Left lung (tissue), 14 donors: ENCODE measurements at regions of chr10 and their contacts with region 1.

Region 1: DNA sequence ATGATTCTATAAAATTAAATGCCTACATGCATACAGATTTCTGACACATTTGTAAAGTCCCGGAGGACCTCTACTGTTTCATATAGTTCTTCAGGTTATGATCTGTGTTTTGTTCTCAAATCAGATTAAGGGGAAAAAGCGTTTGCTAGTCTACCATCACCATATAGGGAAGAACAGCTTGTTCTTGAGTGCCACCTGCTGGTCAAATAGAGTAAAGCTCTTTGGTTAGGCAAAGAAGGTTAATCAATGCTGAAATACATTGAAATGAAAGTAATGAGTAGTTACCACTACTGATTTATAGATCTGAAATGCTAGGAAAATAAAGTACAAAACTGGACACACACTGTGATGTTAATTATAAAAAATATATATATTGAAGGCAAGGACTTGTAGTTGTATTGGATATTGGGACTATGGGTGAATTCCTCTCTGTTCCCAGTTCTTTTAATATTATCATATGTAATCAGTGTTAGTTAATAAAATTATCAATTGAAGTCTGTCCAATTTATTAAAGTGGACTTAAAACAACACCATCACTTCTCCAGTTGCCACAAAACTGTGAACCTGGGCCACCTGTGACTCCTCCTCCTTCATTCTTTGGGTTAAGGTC is 72.6 kb upstream of the PDLIM1 start:
- DNase-seq: peak in 2 of 4 donors; percentile 43 to 70
- ATAC-seq: peak; percentile 81
- H3K4me3 ChIP-seq: no peak overlapping the region
- H3K27ac ChIP-seq: no peak overlapping the region
- H3K4me1 ChIP-seq: peaks cover 0 to 5% of the 10 kb centered on the region in 2 donors
- H3K27me3 ChIP-seq: no peaks in the 10 kb centered on the region
- CTCF ChIP-seq: peak; percentile 86 to 92

Region 2: GRCh38 chr10:95214793-95215192 is 148.6 kb before region 1 on chr10:
- intact Hi-C with region 1: loop called in 1 of 2 experiments (anchors 10 kb)
- DNase-seq: no peak
- ATAC-seq: peak; percentile 79
- H3K4me3 ChIP-seq: no peak overlapping the region
- H3K27ac ChIP-seq: no peak overlapping the region
- H3K4me1 ChIP-seq: no peaks in the 10 kb centered on the region
- H3K27me3 ChIP-seq: no peaks in the 10 kb centered on the region
- CTCF ChIP-seq: no peak

Region 3: DNA sequence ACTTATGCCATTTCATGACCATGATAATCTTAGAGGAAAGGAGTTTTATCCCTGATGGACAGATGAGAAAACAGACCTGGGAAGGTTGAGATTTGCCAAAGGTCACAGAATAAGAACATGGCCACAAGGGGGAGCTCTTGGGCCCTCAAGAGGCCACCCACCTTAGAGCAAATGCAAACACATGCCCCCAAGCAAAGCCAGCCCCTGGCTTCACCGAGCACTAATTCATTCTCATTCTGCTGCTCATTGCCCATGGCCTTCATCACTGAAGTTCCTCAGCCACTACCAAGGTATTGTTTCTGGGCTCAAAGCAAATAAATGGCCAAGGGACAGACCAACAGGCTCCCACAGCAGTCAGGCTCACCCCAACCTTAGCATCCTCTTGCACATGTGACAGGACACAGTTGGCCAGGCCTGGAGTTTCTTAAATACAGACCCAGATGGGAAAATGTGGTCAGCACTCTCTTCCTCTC is 116.8 kb before region 1 on chr10:
- intact Hi-C with region 1: loop called in 1 of 2 experiments (anchors 5 kb)
- DNase-seq: peak in 3 of 4 donors; percentile 65 to 78 (median 67)
- ATAC-seq: peak; percentile 67
- H3K4me3 ChIP-seq: no peak overlapping the region
- H3K27ac ChIP-seq: peak overlapping the region in 1 of 2 donors; percentile 60
- H3K4me1 ChIP-seq: peaks cover 0 to 19% of the 10 kb centered on the region in 2 donors
- H3K27me3 ChIP-seq: no peaks in the 10 kb centered on the region
- CTCF ChIP-seq: peak; percentile 74 to 88